ENCODE measurements at regions of chr3 and their contacts with region 1.

Region 1: DNA sequence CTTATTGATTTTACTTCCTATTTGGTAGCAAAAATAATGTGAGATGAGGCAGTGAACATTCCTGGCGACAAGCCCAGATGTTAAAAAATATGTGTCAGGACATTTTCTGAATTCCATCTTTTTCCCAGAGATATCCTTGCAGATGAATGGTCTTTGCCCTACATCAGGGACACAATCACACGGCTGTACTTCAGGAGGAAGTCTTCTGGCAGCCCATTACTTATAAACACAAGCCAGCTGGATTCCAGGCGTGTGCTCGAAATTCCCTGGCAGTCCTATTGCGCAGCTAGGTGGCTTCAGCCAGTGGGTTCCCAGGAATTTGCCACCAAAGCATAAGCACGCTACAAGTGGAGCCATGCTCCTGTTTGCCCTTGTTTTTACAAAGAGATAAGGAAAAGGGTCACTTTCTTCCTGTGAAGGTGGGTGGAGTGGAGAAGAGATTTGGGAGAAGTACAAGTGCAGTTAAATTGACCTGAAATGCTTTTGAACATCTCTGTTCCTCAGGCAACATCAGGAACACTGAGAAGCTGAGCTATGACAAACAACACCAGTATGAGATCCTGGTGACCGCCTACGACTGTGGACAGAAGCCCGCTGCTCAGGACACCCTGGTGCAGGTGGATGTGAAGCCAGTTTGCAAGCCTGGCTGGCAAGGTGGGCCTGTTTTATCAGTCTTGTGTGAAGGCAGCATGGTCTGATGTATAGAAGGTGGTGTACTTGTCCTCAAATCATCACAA is 257.1 kb upstream of the TRIM42 start:
- DNase-seq: no peak
- ATAC-seq: no peak
- H3K4me3 ChIP-seq: no peak overlapping the region
- H3K27ac ChIP-seq: no peak overlapping the region
- H3K4me1 ChIP-seq: peaks cover 0 to 2% of the 10 kb centered on the region in 2 donors
- H3K27me3 ChIP-seq: no peaks in the 10 kb centered on the region

Region 2: DNA sequence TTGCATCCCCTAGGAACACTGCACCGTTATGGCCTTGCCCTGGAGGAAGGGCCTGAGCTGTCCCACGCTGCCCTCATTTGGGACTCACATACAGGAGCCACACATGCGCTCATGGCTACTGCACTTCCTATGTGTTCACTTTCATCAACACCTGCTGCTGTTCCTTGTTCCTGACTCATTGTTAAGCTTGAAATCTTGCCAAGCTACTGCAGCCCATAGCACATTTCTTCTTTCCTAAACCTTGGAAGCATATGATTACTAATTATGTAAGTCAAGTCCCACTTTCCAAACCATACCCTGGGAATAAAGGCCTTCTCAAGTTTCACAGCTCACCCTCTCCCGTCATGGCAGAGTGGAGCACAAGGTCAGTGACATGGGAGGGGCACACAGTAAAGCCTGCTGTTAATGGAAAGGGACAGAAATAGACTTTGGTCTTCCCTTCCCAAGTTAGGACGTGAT is 177.9 kb before region 1 on chr3:
- intact Hi-C with region 1: loop called in 1 of 2 experiments (anchors 10 kb)
- DNase-seq: no peak
- ATAC-seq: no peak
- H3K4me3 ChIP-seq: no peak overlapping the region
- H3K27ac ChIP-seq: no peak overlapping the region
- H3K4me1 ChIP-seq: peaks cover 2 to 3% of the 10 kb centered on the region in 2 donors
- H3K27me3 ChIP-seq: no peaks in the 10 kb centered on the region

Region 3: DNA sequence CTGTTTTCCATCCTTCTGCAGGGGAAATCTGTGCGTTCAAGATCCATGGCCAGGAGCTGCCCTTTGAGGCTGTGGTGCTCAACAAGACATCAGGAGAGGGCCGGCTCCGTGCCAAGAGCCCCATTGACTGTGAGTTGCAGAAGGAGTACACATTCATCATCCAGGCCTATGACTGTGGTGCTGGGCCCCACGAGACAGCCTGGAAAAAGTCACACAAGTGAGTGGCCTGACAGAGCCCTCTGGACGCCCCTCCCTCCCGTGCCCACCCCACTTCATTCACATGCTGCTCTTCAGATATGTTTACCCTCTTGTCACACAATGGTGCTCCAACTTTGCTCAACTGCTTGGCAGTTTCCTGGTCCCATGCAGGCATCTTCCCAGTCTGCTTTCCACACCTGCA is 17.2 kb before region 1 on chr3:
- intact Hi-C with region 1: no loop called
- DNase-seq: no peak
- ATAC-seq: no peak
- H3K4me3 ChIP-seq: no peak overlapping the region
- H3K27ac ChIP-seq: no peak overlapping the region
- H3K4me1 ChIP-seq: no peaks in the 10 kb centered on the region
- H3K27me3 ChIP-seq: no peaks in the 10 kb centered on the region